A549 (cell line): ENCODE measurements at regions of chr11 and their contacts with region 1.

Region 1: DNA sequence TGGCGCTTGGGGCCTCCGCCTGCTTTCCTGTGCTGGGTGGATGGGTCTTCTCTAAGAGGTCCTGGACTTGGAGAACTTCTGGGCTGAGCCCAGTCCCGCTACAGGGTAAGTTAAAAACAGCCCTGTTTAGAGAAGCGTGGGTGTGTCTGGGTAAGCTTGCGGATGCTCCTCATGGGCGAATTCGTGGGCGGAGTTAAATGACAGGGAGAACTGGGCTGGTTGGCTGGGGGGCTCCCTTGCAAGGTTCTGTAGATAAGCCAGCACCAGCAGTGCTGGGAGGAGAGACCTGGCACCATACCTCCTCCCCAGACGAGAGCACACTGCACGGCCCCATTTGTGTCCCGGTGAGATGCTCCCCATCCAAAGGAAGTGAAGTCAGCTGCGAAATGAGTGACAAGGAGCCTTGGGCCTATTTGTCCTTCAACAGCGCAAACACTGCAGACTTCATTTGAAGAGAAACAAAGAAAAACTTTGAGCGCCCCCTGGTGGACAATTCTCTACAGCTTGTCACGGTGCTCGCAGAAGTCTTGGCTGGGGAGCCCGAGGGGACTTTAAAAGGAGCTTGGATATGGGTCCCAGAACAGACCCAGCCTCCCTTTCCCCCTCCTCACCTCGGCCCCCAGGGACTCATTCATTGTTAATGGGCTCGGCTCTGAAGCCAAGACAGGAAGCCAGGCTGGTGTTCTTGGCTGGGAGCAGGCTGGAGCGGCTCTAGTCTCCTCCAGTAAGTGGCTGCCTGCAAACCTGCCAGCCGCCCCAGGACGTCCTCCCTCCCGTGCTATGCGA is 39.5 kb downstream of the TP53I11 start:
- DNase-seq: peak; percentile 82 to 88
- ATAC-seq: peak; percentile 75 to 97
- H3K4me3 ChIP-seq: no peak overlapping the region
- H3K27ac ChIP-seq: no peak overlapping the region
- H3K4me1 ChIP-seq: no peaks in the 10 kb centered on the region
- CTCF ChIP-seq: peak; percentile 87
- EP300 ChIP-seq: no peak
- POLR2A ChIP-seq: no peak
- RAD21 ChIP-seq: peak; percentile 83 to 88

Region 2: DNA sequence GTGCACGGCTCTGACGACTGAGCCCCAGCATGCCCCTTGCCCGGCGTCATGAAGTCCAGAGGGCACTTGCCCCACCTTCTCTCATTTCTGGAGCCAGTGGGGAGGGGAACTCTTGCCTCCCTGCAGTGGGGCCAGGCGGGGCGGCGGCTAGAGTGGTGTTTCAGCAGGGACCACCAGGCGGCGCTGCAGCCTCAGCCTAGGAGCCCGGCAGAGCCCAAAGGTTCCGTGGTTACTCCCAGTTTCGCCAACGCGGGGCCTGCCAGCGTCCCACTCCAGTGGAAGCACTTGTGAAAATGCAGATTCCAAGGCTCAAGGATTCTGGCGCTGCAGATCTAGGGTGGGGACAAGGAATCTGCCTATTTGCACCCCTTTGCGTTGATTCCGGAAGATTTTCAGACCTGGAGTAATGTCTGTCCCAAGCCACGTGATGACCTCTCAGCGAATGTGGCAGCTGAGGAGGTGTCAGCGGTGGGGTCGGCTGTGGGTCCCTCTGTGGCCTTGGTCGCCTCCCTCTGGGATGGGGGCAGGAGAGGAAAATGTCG is 290.0 kb before region 1 on chr11:
- CTCF ChIA-PET with region 1: interaction called, 400 read pairs
- POLR2A ChIA-PET with region 1: interaction called, 3 read pairs
- DNase-seq: peak; percentile 75 to 82
- ATAC-seq: peak; percentile 72 to 93
- H3K4me3 ChIP-seq: peak overlapping the region; percentile 38
- H3K27ac ChIP-seq: peak overlapping the region; percentile 67 to 69
- H3K4me1 ChIP-seq: no peaks in the 10 kb centered on the region
- CTCF ChIP-seq: peak; percentile 96
- EP300 ChIP-seq: no peak
- POLR2A ChIP-seq: no peak
- RAD21 ChIP-seq: peak; percentile 95 to 99

Region 3: GRCh38 chr11:44718612-44719390 is 192.4 kb before region 1 on chr11:
- CTCF ChIA-PET with region 1: interaction called, 18 read pairs
- POLR2A ChIA-PET with region 1: no interaction called
- DNase-seq: no peak
- ATAC-seq: no peak
- H3K4me3 ChIP-seq: no peak overlapping the region
- H3K27ac ChIP-seq: no peak overlapping the region
- H3K4me1 ChIP-seq: no peaks in the 10 kb centered on the region
- CTCF ChIP-seq: no peak
- EP300 ChIP-seq: no peak
- POLR2A ChIP-seq: no peak
- RAD21 ChIP-seq: no peak

Region 4: GRCh38 chr11:44785856-44786606 is 125.2 kb before region 1 on chr11:
- CTCF ChIA-PET with region 1: interaction called, 16 read pairs
- POLR2A ChIA-PET with region 1: no interaction called
- DNase-seq: peak; percentile 14 to 43
- ATAC-seq: peak; percentile 76 to 91; a peak in 5 of 6 replicates
- H3K4me3 ChIP-seq: no peak overlapping the region
- H3K27ac ChIP-seq: 0 out of 6 replicates have a peak overlapping the region, but pooled peaks of 1 of the 2 experiments have one; percentile 20
- H3K4me1 ChIP-seq: peaks cover 2% of the 10 kb centered on the region; the same call in 1 of the 3 replicates
- CTCF ChIP-seq: no peak; the same call in 2 of the 3 replicates
- EP300 ChIP-seq: no peak
- POLR2A ChIP-seq: no peak
- RAD21 ChIP-seq: peak in 1 of 2 experiments; percentile 43; a peak in 2 of 5 replicates

Region 5: GRCh38 chr11:44927174-44927661 is 16.0 kb after region 1 on chr11:
- CTCF ChIA-PET with region 1: interaction called, 62 read pairs
- POLR2A ChIA-PET with region 1: no interaction called
- DNase-seq: peak; percentile 79 to 84
- ATAC-seq: peak; percentile 86 to 93
- H3K4me3 ChIP-seq: no peak overlapping the region
- H3K27ac ChIP-seq: no peak overlapping the region
- H3K4me1 ChIP-seq: no peaks in the 10 kb centered on the region
- CTCF ChIP-seq: peak; percentile 91
- EP300 ChIP-seq: no peak
- POLR2A ChIP-seq: no peak
- RAD21 ChIP-seq: peak; percentile 83 to 89

Region 6: DNA sequence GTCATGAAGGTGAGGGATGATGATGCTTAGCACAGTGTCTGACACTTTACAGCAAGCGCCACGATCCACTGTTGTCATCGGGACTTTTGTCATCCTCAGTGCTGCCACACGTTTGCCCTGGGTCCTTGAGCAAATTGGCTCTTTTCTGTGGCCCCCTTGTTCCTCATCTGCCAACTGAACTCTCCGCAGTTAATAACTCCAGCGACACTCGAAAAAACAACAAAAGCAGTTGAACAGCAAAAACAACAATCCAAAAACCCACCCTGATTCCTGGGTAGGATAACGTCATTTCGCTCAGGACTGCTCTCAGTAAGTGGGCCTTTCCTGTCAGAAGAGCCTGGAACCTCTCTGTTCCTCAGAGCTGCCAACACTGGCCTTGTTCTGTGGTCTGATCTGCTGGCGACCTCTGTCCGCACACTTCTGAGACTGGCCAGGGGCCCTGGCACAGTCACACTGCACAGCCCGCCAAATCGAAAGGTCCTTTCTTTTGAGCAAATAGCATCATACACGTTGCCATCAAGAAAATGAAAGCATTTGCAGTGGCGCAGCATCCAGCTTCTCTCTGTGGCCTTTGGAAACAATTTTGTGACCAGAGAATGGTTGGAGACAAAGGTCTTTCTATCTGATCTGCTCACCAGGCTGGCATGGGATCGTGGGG is 454.9 kb after region 1 on chr11:
- CTCF ChIA-PET with region 1: no interaction called
- POLR2A ChIA-PET with region 1: no interaction called
- DNase-seq: no peak
- ATAC-seq: no peak
- H3K4me3 ChIP-seq: no peak overlapping the region
- H3K27ac ChIP-seq: no peak overlapping the region
- H3K4me1 ChIP-seq: no peaks in the 10 kb centered on the region
- CTCF ChIP-seq: no peak
- EP300 ChIP-seq: no peak
- POLR2A ChIP-seq: no peak
- RAD21 ChIP-seq: no peak